ENCODE measurements at regions of chr14 and their contacts with region 1.

Region 1: GRCh38 chr14:91996948-91997371 is 42.9 kb downstream of the TRIP11 start:
- DNase-seq: no peak
- H3K4me3 ChIP-seq: no peak overlapping the region
- H3K27ac ChIP-seq: no peak overlapping the region
- H3K4me1 ChIP-seq: peaks cover 0 to 11% (median 2%) of the 10 kb centered on the region in 4 donors
- H3K27me3 ChIP-seq: no peaks in the 10 kb centered on the region
- CTCF ChIP-seq: peak; percentile 61 to 65

Region 2: DNA sequence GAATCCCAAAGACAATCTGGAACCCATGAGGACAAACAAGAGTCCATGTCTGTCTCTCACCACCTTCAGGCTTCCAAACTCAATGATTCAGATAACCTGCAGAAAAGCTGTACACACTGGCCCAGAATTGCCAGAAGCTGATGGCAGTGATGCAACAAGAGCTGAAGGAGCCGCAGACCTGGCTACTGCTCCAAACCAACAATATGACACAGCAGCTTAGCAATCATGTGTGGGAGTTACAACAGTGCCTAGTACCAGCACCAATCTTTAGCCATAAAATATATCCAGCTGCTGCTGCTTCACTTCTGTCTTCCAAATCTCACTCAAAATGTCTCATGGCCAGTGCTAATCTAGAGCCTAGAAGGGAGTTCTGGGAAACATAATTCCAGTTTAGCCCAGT is 958.5 kb before region 1 on chr14:
- intact Hi-C with region 1: no loop called
- DNase-seq: peak in 1 of 2 donors; percentile 40
- H3K4me3 ChIP-seq: no peak overlapping the region
- H3K27ac ChIP-seq: no peak overlapping the region
- H3K4me1 ChIP-seq: peaks cover 0 to 4% (median 2%) of the 10 kb centered on the region in 4 donors
- H3K27me3 ChIP-seq: no peaks in the 10 kb centered on the region
- CTCF ChIP-seq: no peak

Region 3: DNA sequence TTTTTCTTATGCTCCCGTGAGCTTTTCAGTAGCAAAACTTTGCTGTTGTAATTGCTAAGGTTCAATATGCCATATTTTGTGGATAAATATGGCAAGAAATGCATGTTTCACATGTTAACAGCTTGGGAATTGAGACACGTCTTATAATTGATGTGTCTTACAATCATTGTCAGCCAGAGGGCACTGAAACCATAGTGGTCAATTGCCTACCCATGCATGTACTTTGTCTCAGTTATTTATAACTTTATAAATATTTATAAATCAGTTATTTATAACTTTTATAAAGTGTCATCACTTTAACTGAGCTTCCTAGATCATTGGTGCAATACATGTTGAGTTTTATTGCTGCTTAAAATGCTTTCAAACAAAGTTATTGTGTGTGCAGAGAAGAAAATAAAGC is 347.0 kb before region 1 on chr14:
- intact Hi-C with region 1: loop called (anchors 10 kb)
- DNase-seq: no peak
- H3K4me3 ChIP-seq: no peak overlapping the region
- H3K27ac ChIP-seq: no peak overlapping the region
- H3K4me1 ChIP-seq: peaks cover 0 to 5% (median 0%) of the 10 kb centered on the region in 4 donors
- H3K27me3 ChIP-seq: no peaks in the 10 kb centered on the region
- CTCF ChIP-seq: peak; percentile 49 to 52

Region 4: DNA sequence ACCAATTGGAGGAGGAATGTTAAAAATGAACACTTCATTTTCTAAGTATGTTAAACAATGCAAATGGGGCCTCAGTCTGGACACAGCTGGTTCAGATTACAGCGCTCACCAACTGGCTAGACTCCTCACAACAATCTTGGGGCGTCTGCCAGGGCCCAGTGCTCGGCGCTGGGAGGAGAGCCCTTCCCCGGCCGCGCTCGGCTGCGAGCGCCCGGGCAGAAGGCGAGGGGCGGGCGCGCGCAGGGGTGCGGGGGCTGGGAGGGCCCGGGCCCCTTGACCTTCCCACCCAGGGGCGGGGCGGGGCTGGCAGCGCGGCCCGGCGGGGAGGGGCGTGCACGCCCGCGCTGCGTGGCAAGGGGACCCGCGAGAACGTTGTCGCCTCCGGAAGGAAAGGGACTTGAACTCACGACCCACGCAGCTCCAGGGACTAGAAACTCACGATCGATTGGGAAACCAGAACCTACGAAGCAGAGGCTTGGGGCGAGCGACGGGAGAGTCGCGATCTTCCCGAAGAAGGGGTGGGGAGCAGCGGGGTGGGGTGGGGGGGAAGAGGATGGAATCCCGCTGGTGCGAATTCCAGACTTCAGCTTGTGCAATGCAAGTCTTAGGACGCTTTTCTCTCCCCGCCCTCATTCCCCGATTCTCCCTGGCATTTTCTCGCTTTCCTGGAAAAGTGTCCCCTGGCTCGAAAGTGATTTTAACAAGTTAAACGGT is 49.3 kb before region 1 on chr14 and contains the start of gene FBLN5:
- intact Hi-C with region 1: loop called (anchors 5 kb)
- DNase-seq: peak; percentile 65 to 84
- H3K4me3 ChIP-seq: peak within 1 kb of the TSS; percentile 77 to 79
- H3K27ac ChIP-seq: peak within 1 kb of the TSS; percentile 81 to 92
- H3K4me1 ChIP-seq: peaks cover 0 to 35% (median 13%) of the 10 kb centered on the region in 4 donors
- H3K27me3 ChIP-seq: no peaks in the 10 kb centered on the region
- CTCF ChIP-seq: no peak